GM18951 (cell line): ENCODE measurements at regions of chr3 and their contacts with region 1.

Region 1: GRCh38 chr3:51501833-51502561 is 2.2 kb upstream of the DCAF1 start:
- POLR2A ChIP-seq: no peak

Region 2: GRCh38 chr3:51637941-51638471 is 136.0 kb after region 1 on chr3:
- in situ Hi-C with region 1: loop called (anchors 10 kb)
- POLR2A ChIP-seq: no peak

Region 3: DNA sequence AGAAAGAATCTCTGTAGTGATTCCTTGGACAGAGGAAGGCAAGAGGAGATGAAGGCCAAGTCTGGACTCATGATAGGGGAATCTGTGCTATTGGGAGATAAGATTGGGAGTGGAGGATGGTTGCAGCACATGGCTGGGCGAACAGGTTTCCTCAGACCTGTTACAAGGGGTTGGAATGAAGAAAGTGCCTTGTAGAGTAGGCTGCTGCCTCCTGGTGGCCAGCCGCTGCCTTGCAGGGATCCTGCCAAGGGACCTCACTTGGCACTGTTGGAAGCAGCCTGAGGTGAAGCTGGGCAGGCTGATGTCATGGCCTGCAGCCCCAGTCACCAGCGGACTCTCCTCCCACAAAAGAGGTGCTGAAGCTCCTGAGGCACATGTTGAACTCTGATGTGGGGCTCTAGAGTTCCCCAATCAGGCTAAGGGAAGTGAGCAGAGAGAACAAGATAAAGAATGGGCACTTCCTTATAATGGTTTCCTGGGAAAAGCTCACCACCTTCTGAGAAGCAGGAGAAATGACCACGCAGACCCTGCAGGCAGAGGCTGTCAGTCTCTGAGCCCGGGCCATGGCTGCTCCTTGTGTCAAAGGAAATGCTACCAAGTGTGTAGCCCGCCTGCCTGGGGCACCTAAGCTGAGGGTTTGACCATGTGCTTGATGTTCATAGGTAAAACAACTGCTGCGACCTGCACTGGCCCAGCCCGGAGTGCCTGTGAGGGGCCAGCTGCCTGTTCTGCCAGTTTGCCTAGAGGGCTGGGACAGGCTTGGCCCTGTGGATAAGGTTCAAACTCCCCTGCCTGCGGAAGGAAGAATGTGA is 167.4 kb after region 1 on chr3:
- in situ Hi-C with region 1: loop called (anchors 10 kb)
- POLR2A ChIP-seq: no peak